ENCODE measurements at regions of chr1 and their contacts with region 1.

Region 1: DNA sequence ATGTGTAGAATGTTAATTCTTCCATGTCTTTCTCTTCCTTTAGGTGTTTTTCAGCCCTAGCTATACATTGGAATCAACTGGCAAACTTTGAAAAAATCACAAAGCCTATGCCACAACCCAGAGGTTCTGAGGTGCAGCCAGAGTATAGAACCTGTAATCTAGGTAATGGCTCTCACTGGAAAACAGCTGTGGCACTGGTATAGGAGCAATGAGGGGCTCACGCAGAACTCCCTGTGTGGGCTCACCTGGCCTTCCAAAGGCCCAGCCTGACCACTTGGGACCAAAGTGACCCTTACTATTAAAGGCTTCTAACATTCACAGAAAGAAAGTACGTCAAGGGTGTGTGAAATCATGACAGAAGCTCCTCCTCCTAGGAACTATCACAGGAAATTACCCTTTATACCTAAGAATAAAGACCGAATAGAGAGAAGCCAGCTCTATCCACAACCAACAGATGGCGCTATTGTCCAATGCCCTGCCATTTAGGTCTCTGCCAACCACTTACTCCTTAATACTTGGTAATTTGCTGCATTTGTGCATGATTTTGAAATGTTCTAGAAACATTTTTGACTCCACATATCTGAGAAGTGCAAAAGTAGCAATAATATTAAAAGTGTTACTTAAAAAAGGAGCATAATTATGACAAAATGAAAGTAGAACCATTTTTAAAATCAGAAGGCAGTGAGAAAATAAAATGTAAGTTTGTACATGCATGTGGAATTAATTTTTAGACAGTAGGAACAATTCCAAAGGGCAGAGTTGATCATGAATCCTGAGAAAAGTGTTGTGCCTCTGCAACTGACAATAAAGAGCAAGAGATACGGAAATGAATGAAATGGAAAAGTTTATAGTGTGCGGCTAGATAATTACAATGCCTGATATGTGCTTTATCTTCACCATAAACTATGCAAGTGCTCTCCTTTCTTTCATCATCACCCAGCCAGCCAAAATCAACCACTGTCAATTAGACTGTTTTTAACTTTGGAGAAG is 93.1 kb upstream of the HAO2 start:
- DNase-seq: peak; percentile 49
- CTCF ChIP-seq: peak; percentile 72

Region 2: DNA sequence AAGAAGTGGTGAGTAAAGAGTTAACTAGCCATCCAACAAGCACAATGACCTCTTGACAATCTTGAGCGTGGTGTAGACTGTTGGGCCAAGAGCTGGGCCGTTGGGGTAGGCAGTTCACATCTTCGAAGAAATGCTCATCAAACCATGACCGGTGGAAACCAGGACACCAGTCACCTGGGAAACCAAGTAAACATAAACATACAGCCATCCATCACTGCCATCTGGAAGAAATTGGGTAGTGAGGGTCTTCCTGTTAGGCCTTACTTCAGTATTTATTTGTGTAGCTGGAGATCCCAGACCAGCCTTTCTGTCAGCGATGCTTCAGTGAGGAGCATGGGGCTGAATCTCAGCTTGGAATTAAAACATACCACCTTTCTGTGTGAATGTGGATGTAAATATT is 14.9 kb before region 1 on chr1:
- CTCF ChIA-PET with region 1: interaction called, 44 read pairs
- POLR2A ChIA-PET with region 1: no interaction called
- DNase-seq: no peak
- CTCF ChIP-seq: no peak

Region 3: GRCh38 chr1:119286587-119287181 is 11.2 kb after region 1 on chr1:
- CTCF ChIA-PET with region 1: interaction called, 13 read pairs
- POLR2A ChIA-PET with region 1: no interaction called
- DNase-seq: peak; percentile 51
- CTCF ChIP-seq: peak; percentile 74

Region 4: DNA sequence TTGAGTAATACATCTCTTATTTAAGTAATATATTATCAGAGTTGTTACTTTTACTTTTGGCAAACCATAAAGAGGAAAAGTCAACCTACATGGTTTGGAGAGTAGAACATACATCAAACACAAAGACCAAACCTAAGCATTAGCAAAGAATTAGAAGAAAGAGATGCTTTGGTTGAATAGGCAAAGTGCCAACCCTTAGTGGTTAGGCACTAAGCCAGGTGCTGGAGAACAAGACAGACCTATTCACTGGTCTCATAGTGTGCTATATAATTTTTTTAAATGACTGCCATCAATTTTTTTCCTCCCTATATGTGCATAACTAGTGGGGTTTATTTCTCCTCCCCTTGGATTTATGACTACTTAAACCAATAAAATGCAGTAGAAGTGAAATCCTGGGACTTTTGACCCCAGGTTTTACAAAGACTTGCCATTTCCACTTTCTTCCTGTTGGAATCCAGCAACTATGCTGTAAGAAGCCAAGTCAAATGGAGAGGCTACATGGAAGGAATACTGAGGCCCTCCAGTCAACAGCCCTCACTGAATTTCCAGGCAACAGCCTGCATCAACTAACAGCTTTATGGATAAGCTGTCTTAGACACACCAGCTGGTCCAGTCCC is 23.4 kb after region 1 on chr1:
- CTCF ChIA-PET with region 1: interaction called, 10 read pairs
- POLR2A ChIA-PET with region 1: no interaction called
- DNase-seq: no peak
- CTCF ChIP-seq: no peak

Region 5: GRCh38 chr1:119358636-119359035 is 83.2 kb after region 1 on chr1:
- CTCF ChIA-PET with region 1: interaction called, 31 read pairs
- POLR2A ChIA-PET with region 1: no interaction called
- DNase-seq: no peak
- CTCF ChIP-seq: no peak

Region 6: DNA sequence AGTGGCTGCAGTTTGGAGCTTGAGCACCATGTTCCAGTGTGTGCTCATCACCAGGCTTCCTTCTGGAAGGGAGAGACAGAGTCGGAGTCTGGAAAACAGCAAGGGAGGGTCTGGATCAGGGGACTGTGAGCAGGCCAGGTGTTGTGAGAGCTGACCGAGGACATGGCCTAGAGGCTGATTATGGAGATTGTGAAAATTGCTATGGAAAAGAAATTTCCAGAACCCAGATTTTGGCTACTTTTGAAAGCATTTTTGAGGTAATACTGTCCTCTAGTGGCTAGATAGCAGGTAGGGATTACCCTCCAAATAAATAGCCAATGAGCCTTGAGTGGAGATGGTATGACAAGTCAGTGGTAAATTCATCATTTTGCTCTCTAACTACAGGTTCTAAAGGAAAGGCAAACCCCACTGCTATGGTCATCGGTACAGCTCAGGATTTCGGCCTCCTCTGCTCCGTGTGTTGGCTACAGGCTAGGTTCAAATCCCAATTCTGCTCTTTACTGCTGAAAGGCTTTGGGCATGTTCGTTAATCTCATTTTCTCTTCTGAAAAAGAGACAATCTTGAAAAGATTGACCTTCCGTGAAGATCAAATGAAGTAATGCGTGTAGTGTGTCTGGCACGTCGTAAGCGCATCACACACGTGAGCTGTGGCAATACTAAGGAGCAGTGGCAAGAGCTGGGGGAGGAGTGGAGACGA is 92.1 kb after region 1 on chr1:
- CTCF ChIA-PET with region 1: interaction called, 79 read pairs
- POLR2A ChIA-PET with region 1: no interaction called
- DNase-seq: peak; percentile 52
- CTCF ChIP-seq: peak; percentile 74

Region 7: DNA sequence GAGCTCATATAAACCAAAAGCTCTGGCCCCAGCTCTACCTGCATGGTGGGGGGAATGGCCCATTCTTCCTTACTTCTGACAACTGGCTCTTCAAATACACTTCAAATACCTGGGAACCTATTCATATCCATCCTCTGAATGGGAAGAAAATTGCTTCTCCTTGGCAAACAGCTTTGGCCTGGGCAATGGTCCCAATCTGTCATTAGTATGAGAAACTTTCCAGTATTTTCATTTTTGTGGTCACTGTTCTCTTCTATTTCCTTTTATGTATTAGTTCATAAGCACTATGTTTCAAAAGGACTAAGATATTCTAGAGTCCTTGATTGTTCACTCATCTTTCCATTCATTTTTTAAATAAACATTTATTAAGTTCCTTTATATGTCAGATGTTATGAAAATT is 134.3 kb after region 1 on chr1:
- CTCF ChIA-PET with region 1: no interaction called
- POLR2A ChIA-PET with region 1: no interaction called
- DNase-seq: no peak
- CTCF ChIP-seq: no peak

Measured in GM10248 (cell line).